ENCODE measurements at regions of chr12 and their contacts with region 1.

Region 1: DNA sequence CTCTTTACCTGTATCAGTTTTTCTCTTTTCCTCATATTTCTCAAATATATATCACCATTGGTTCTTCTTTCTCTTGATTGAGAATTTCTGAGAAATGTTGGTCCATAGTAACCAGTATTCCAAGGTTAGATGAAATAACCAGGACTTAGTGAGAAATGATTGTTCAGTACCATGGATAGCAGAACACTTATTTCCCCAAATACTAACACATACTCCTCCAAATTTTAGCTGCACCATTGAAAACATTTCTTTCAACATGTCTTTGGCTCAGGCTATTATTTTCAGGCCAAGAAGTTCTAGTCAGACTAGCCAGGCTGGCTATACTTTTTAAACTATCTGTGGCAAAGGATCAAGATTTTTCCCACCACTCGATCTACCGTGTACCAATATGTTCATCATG is 113.3 kb downstream of the PTPRO start:
- DNase-seq: no peak
- H3K4me3 ChIP-seq: no peak overlapping the region
- H3K27ac ChIP-seq: no peak overlapping the region
- H3K4me1 ChIP-seq: no peaks in the 10 kb centered on the region
- H3K27me3 ChIP-seq: no peaks in the 10 kb centered on the region
- CTCF ChIP-seq: no peak

Region 2: DNA sequence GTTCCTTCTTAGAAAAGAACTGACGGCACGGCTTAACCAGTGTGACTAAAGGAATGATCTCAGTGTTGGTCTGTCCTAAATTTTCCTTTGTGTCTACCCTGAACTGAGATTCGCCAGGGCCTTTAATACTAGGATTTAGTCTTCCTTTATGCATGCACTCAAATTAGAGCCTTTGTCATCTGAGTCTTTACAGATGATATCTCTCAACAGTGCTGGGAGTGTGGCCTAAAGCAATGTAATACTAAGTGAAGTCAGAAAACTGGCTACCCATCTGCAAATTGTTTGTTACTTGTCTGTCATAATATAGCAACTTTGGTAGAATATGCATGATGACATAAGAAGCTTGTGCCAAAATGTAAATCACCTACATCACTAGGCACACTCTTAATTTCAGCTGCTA is 17.9 kb before region 1 on chr12:
- intact Hi-C with region 1: loop called (anchors 1 kb)
- DNase-seq: no peak
- H3K4me3 ChIP-seq: no peak overlapping the region
- H3K27ac ChIP-seq: no peak overlapping the region
- H3K4me1 ChIP-seq: no peaks in the 10 kb centered on the region
- H3K27me3 ChIP-seq: no peaks in the 10 kb centered on the region
- CTCF ChIP-seq: no peak